Caco-2 (cell line): ENCODE measurements at regions of chr4 and their contacts with region 1.

Region 1: GRCh38 chr4:99885063-99885664 is 9.1 kb downstream of the LAMTOR3 start:
- DNase-seq: peak in 1 of 2 experiments; percentile 29
- H3K4me3 ChIP-seq: no peak overlapping the region
- H3K4me3 Mint-ChIP-seq: no peak overlapping the region
- H3K27ac Mint-ChIP-seq: no peak overlapping the region
- H3K4me1 ChIP-seq: no peaks in the 10 kb centered on the region
- H3K4me1 Mint-ChIP-seq: no peaks in the 10 kb centered on the region
- H3K27me3 ChIP-seq: no peaks in the 10 kb centered on the region
- H3K27me3 Mint-ChIP-seq: no peaks in the 10 kb centered on the region
- CTCF ChIP-seq: peak; percentile 37 to 55

Region 2: DNA sequence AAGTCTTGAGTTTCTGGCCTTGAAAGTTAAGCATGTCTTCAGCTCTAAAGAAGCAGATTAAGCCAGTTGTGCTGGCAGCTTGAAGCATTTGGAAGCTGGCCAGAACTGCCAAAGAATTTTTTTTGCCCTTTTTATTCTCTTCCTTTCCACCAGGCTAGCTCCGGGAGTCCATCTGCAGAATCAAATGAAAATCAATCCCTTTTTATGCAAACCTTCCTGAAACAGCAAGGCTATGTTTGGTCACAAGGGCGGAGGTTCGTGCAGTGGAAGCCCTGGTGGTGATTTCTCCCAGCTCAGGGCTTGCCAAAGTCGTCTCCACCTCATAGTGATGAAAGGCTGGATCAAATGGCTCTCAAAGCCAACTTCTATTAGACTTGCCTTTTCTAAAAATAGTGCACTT is 206.0 kb before region 1 on chr4:
- CTCF ChIA-PET with region 1: no interaction called
- POLR2A ChIA-PET with region 1: no interaction called
- intact Hi-C with region 1: no loop called
- DNase-seq: no peak
- H3K4me3 ChIP-seq: no peak overlapping the region
- H3K4me3 Mint-ChIP-seq: no peak overlapping the region
- H3K27ac Mint-ChIP-seq: no peak overlapping the region
- H3K4me1 ChIP-seq: no peaks in the 10 kb centered on the region
- H3K4me1 Mint-ChIP-seq: no peaks in the 10 kb centered on the region
- H3K27me3 ChIP-seq: no peaks in the 10 kb centered on the region
- H3K27me3 Mint-ChIP-seq: peaks cover 11% of the 10 kb centered on the region
- CTCF ChIP-seq: no peak

Region 3: GRCh38 chr4:99723612-99724011 is 161.6 kb before region 1 on chr4:
- CTCF ChIA-PET with region 1: no interaction called
- POLR2A ChIA-PET with region 1: no interaction called
- intact Hi-C with region 1: loop called (anchors 10 kb)
- DNase-seq: no peak
- H3K4me3 ChIP-seq: no peak overlapping the region
- H3K4me3 Mint-ChIP-seq: no peak overlapping the region
- H3K27ac Mint-ChIP-seq: no peak overlapping the region
- H3K4me1 ChIP-seq: no peaks in the 10 kb centered on the region
- H3K4me1 Mint-ChIP-seq: no peaks in the 10 kb centered on the region
- H3K27me3 ChIP-seq: no peaks in the 10 kb centered on the region
- H3K27me3 Mint-ChIP-seq: peaks cover 4% of the 10 kb centered on the region
- CTCF ChIP-seq: no peak